ENCODE measurements at regions of chr10 and their contacts with region 1.

Region 1: DNA sequence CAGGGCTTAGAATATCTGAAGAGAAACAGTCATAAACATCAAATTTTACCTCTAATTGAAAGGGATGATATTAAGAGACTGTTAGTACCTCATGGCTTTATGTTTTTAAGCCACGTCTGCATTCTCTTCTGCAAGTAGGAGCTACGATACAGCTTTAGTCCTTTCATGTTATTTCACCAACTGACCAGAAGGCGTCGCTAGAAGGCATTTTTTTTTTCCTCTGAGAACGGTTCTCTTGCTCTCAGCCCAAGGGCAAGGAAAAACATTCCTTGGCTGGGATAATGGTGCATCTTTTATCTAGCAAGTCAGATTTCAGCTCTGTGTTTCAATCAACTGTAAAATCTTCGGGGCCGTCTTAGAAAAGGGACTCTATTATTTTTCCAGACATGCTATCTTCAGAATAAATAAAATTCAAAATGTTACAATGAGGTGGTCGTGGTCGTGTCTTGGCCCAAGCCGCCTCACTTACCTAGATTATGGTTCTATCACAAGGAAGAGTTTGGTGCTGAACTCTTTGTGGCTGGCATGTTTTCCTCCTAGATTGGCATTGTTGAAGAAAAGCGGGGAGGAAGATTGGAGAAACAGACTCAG is 41.6 kb upstream of the LYZL2 start:
- DNase-seq: peak in 1 of 5 donors; percentile 26
- ATAC-seq: peak in 3 of 4 donors; percentile 41 to 67 (median 52)
- H3K4me3 ChIP-seq: peak overlapping the region in 8 of 12 donors; percentile 9 to 55 (median 34)
- H3K27ac ChIP-seq: no peak overlapping the region
- H3K4me1 ChIP-seq: peaks cover 0 to 3% (median 0%) of the 10 kb centered on the region in 12 donors
- H3K27me3 ChIP-seq: no peaks in the 10 kb centered on the region
- CTCF ChIP-seq: peak; percentile 62 to 83 (median 73)
- POLR2A ChIP-seq: no peak

Region 2: DNA sequence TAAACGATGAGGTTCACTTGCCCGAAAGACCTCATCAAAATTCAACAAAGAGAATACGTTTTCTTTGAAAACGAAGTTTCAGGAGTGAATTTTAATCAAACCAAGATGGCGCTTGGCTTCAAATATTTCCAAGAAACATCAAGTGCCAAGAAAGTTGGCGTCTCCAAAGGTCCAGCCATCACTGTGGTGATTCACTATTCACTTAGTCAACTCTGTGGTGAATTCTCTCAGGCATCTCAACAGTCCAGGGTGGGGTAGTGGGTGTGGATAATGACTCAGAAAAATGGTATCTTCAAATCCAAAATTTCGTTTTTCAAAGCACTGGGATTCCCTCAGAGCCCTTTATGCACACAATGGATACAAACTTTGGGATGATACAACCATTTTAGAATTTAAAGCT is 1169.4 kb before region 1 on chr10:
- intact Hi-C with region 1: loop called in 1 of 10 experiments (anchors 10 kb)
- DNase-seq: no peak
- ATAC-seq: peak in 2 of 4 donors; percentile 31 to 51
- H3K4me3 ChIP-seq: no peak overlapping the region
- H3K27ac ChIP-seq: no peak overlapping the region
- H3K4me1 ChIP-seq: no peaks in the 10 kb centered on the region
- H3K27me3 ChIP-seq: no peaks in the 10 kb centered on the region
- CTCF ChIP-seq: no peak
- POLR2A ChIP-seq: no peak

Region 3: GRCh38 chr10:30534465-30535144 is 136.5 kb before region 1 on chr10:
- intact Hi-C with region 1: no loop called
- DNase-seq: peak in 4 of 5 donors; percentile 62 to 66 (median 64)
- ATAC-seq: peak in 3 of 4 donors; percentile 66 to 71 (median 68)
- H3K4me3 ChIP-seq: no peak overlapping the region
- H3K27ac ChIP-seq: peak overlapping the region in 1 of 12 donors; percentile 91
- H3K4me1 ChIP-seq: peaks cover 0 to 87% (median 16%) of the 10 kb centered on the region in 12 donors
- H3K27me3 ChIP-seq: no peaks in the 10 kb centered on the region
- CTCF ChIP-seq: peak; percentile 83 to 95 (median 87)
- POLR2A ChIP-seq: no peak

Region 4: GRCh38 chr10:30639946-30640786 is 31.0 kb before region 1 on chr10:
- intact Hi-C with region 1: no loop called
- DNase-seq: peak in 1 of 5 donors; percentile 43
- ATAC-seq: peak in 1 of 4 donors; percentile 33
- H3K4me3 ChIP-seq: no peak overlapping the region
- H3K27ac ChIP-seq: peak overlapping the region in 3 of 12 donors; percentile 32 to 61 (median 47)
- H3K4me1 ChIP-seq: peaks cover 0 to 37% (median 13%) of the 10 kb centered on the region in 12 donors
- H3K27me3 ChIP-seq: peaks cover 0 to 5% (median 0%) of the 10 kb centered on the region in 9 donors
- CTCF ChIP-seq: peak; percentile 76 to 92 (median 88)
- POLR2A ChIP-seq: no peak